Tibial artery (tissue), 4 donors: ENCODE measurements at regions of chr11 and their contacts with region 1.

Region 1: DNA sequence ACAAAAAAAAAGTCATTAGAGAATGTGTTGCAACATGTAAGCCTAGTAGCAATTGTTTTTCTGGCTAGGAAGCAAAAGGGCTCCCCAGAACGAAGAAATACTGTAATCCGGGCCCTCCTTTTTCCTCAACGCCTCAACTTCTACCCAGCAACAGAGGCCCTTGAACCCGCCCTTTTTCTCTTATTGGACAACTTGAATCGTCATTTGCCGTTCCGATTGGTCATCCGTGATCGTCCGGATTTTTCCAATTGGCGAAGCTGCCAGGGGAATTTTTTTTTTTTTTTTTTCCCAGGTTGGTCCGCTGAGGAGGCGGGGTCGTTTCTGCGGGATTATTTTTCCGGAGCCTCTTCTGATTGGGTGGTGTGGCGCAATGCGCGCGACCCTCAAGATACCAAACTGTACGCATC is 510 bp upstream of the HNRNPUL2 start:
- DNase-seq: peak; percentile 87 to 93
- H3K4me3 ChIP-seq: peak overlapping the region; percentile 85 to 89
- H3K27ac ChIP-seq: peak overlapping the region; percentile 88 to 90
- H3K4me1 ChIP-seq: peaks cover 0 to 62% (median 46%) of the 10 kb centered on the region in 4 donors
- H3K27me3 ChIP-seq: no peaks in the 10 kb centered on the region
- CTCF ChIP-seq: no peak

Region 2: DNA sequence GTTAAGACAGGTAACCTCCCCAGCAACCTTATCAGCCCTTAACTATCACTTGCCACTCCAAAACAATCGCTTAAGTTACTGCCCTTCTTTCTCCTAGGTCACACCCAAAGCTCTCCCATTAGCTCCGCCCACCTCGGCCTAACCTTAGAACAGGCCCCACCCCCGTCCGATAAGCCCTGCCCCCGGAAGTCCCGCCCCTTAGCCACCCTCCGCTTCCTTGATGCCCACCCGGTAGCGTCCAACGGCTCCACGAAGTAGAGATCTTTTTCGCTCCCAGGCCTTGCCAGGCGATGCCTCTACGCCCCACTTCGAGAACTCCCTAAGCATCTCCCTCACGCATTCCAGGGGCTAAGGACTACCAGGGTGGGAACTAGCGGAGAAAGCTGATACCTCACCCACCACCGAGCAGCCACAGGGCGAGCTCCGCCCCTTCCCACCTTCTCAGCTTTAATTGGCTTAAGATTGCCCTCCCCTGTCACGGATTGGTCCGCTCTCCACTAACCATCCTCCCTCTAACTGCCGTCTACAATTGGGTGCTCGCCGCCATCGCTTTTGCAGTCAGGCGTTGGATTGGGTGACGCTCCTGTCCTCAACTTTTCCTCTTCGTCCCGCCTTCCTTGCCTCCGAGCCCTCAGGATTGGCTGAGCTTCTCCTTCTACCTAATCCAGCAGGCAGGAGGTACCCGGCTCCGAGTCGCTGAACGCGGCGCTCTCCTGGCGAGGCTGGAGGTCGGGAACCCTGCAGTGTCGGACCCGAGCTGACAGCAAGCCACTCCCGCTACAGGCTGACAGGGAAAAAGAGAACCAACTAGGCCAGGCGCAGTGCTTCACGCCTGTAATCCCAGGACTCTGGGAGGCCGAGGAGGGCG is 26.2 kb after region 1 on chr11 and contains the start of gene ZBTB3:
- intact Hi-C with region 1: loop called (anchors 1 kb)
- DNase-seq: peak; percentile 99
- H3K4me3 ChIP-seq: peak within 1 kb of the TSS; percentile 62 to 66
- H3K27ac ChIP-seq: peak within 1 kb of the TSS; percentile 90 to 91
- H3K4me1 ChIP-seq: peaks cover 0 to 25% (median 18%) of the 10 kb centered on the region in 4 donors
- H3K27me3 ChIP-seq: no peaks in the 10 kb centered on the region
- CTCF ChIP-seq: peak in 1 of 2 experiments; percentile 41

Region 3: DNA sequence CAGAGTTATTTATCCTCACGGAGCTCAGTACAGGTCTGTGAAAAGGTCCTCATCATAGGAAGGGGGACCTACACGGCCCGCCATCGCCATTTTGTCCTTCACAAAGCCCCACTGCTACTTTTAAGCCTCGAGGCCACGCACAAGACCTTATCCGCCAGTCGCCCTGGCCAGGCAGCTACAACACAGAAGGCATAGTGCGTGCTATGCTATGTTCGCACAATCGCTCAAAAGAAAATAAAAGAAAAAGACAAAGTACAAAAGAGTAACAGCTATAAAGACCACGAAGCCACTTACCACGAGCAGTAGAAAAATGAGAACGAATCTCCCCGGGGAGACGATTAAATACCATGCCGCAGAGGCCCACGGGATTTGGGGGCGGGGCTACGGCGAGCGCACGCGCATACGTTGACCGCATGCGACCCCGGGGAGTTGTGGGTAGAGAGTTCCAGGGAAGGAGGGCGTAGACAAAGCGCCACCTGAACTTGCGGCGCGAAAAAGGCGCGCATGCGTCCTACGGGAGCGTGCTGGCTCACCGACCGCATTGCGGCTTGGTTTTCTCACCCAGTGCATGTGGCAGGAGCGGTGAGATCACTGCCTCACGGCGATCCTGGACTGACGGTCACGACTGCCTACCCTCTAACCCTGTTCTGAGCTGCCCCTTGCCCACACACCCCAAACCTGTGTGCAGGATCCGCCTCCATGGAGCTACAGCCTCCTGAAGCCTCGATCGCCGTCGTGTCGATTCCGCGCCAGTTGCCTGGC is 128.0 kb after region 1 on chr11:
- intact Hi-C with region 1: no loop called
- DNase-seq: peak; percentile 93 to 98
- H3K4me3 ChIP-seq: peak overlapping the region; percentile 68 to 75
- H3K27ac ChIP-seq: peak overlapping the region; percentile 66 to 80
- H3K4me1 ChIP-seq: peaks cover 0 to 24% (median 22%) of the 10 kb centered on the region in 4 donors
- H3K27me3 ChIP-seq: no peaks in the 10 kb centered on the region
- CTCF ChIP-seq: peak in 1 of 2 experiments; percentile 25